ENCODE measurements at regions of chr17 and their contacts with region 1.

Region 1: DNA sequence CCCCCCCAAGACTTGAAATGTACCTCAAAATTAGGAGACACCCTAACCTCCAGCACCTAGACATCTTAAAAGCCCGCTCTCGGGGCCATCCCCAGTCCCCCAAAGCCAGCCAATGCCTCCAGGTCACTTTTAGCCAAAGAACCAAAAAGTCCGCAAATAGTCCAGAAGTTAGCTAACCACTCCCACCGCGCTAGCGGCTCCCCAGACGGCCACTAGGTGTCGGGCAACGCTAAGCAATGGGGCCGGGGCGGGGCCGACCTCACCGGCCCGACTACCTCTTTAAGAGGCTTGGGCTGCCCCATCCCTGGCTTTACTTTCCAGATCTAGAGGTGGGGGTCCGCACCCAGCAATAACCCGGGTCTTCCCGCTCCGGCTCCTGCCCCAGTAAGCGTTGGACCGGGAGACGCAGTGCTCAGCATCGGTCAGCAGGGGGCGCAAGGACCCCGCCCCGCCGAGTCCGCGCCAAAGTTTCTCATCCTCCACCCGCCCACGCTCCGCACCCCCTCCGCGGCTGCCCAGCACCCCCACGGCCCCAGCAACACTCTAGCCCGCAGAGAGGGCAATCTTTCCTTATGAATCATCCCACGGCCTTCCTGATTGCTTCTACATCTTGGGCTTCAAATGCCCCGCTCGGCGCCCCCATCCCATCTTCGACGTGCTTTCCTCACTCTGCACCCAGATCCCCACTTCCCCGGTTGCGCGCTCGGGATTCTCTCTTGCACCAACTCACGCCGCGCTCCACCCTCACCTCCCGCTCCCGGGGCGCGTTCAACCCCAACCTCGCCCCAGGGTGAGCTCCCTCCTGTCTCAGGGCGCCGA is 765 bp downstream of the COL1A1 start:
- DNase-seq: peak; percentile 80
- H3K4me3 ChIP-seq: peak overlapping the region; percentile 49 to 62 (median 61)
- H3K27ac ChIP-seq: peak overlapping the region; percentile 49
- H3K4me1 ChIP-seq: peaks cover 20% of the 10 kb centered on the region
- H3K27me3 ChIP-seq: no peaks in the 10 kb centered on the region
- CTCF ChIP-seq: peak; percentile 69 to 95

Region 2: DNA sequence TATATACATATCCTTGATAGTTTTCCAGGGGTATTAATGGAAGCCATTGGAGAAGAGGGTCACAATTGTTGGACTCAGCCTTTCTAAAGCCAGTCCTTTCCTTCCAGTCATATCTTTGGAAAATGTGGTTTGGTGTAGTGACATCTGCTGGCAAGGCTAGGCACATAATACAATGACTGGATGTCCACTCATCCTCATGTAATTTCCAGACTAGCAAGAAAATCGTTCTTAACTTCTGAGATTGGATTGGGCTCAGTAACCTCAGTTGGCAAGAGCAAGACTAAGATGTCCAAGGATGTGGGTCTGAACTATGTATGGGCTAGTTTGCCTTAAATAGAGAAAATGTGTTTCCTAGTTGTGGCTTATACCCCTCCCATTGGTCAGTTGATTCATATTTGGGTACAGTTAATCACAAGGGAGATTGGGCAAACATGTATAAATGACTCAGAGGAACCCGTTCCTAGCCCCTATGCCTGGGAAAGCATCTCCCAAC is 420.9 kb before region 1 on chr17:
- CTCF ChIA-PET with region 1: no interaction called
- dilution Hi-C with region 1: no loop called
- in situ Hi-C with region 1: no loop called
- intact Hi-C with region 1: no loop called
- DNase-seq: peak; percentile 81
- H3K4me3 ChIP-seq: no peak overlapping the region
- H3K27ac ChIP-seq: no peak overlapping the region
- H3K4me1 ChIP-seq: peaks cover 15% of the 10 kb centered on the region
- H3K27me3 ChIP-seq: no peaks in the 10 kb centered on the region
- CTCF ChIP-seq: peak; percentile 53 to 78

Region 3: DNA sequence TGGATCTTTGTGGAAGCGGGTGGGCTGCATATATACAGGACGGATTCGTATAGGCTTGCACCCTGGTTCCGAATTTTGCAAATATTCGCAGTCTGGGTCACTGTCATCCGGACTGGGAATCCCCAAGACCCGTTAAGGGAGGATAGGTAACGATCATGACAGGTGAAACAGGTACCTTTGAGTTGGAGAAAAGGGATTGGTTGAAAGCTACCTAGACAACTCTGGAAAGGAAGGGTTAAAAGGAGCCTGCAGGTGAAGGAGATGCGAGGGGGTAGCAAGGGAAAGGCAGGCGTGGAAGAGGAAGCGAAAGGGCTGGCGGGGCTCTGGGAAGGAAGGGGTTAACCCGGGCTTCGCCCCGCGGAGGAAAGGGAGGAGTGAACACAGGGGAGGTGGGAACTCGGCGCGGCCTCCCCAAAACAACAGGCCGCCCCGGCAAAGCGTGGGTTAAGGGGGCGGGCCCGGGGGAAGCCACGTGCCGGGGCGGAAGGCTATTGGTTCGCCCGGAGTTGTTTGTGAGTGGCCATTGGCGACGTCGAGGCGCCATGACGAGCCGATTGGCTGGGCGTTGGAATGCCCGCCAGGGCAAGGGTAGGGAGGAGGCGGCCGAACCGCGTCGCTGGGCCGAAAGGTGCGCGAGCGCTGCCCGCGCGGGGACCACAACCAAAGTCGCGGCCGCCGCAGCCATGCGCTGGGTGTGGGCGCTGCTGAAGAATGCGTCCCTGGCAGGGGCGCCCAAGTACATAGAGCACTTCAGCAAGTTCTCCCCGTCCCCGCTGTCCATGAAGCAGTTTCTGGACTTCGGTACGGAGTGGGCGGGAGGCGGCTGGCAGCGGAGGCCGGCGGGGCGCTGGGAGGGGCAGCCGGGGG is 105.7 kb before region 1 on chr17 and contains the start of gene PDK2:
- CTCF ChIA-PET with region 1: no interaction called
- dilution Hi-C with region 1: no loop called
- in situ Hi-C with region 1: no loop called
- intact Hi-C with region 1: loop called (anchors 1 kb)
- DNase-seq: peak; percentile 87
- H3K4me3 ChIP-seq: peak within 1 kb of the TSS in 2 of 3 experiments; percentile 13 to 54
- H3K27ac ChIP-seq: no peak within 1 kb of the TSS
- H3K4me1 ChIP-seq: peaks cover 9% of the 10 kb centered on the region
- H3K27me3 ChIP-seq: no peaks in the 10 kb centered on the region
- CTCF ChIP-seq: no peak
- total RNA-seq, gene PDK2: 18.2 to 24.8 TPM

Region 4: GRCh38 chr17:50146927-50147665 is 53.6 kb before region 1 on chr17:
- CTCF ChIA-PET with region 1: no interaction called
- dilution Hi-C with region 1: no loop called
- in situ Hi-C with region 1: no loop called
- intact Hi-C with region 1: no loop called
- DNase-seq: no peak
- H3K4me3 ChIP-seq: no peak overlapping the region
- H3K27ac ChIP-seq: no peak overlapping the region
- H3K4me1 ChIP-seq: peaks cover 33% of the 10 kb centered on the region
- H3K27me3 ChIP-seq: no peaks in the 10 kb centered on the region
- CTCF ChIP-seq: no peak

Region 5: DNA sequence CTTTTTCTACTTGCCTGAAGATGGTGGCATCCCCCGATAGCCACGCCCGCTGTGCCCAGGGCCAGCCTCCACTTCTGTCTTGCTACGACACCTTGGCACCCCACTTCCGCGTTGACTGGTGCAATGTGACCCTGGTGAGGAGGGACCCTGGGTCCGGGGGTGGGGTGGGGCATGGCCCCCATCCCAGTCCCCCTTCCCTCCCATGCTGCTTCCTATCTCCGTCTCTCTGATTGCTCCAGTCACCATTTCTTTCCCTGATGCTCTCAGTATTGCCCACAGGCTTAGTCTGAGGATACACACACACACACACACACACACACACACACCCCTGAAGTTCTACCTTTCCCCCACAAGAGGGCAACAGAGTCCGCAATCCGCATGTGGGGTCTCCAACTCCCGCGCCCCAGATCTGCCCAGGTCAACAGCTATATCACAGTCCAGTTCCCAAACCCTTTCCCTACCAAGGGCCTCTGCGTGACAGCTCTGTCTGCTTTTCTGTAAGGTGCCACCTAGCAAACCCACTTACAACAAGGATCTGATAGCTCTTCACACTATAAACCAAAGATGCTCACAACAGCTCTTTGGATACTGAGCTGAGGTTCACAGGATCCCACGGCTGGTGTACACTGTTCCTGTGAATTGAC is 31.4 kb before region 1 on chr17:
- CTCF ChIA-PET with region 1: interaction called, 8 read pairs
- dilution Hi-C with region 1: no loop called
- in situ Hi-C with region 1: no loop called
- intact Hi-C with region 1: loop called (anchors 1 kb)
- DNase-seq: peak; percentile 68
- H3K4me3 ChIP-seq: no peak overlapping the region
- H3K27ac ChIP-seq: no peak overlapping the region
- H3K4me1 ChIP-seq: peaks cover 4% of the 10 kb centered on the region
- H3K27me3 ChIP-seq: no peaks in the 10 kb centered on the region
- CTCF ChIP-seq: peak; percentile 90 to 94

Region 6: GRCh38 chr17:50289991-50290702 is 89.5 kb after region 1 on chr17:
- CTCF ChIA-PET with region 1: no interaction called
- dilution Hi-C with region 1: loop called (anchors 5 kb)
- in situ Hi-C with region 1: loop called in 1 of 2 experiments (anchors 5 kb)
- intact Hi-C with region 1: no loop called
- DNase-seq: peak; percentile 89
- H3K4me3 ChIP-seq: peak overlapping the region in 1 of 3 experiments; percentile 10
- H3K27ac ChIP-seq: peak overlapping the region; percentile 37
- H3K4me1 ChIP-seq: peaks cover 20% of the 10 kb centered on the region
- H3K27me3 ChIP-seq: no peaks in the 10 kb centered on the region
- CTCF ChIP-seq: no peak

Region 7: GRCh38 chr17:50361561-50362480 is 161.2 kb after region 1 on chr17:
- CTCF ChIA-PET with region 1: no interaction called
- dilution Hi-C with region 1: no loop called
- in situ Hi-C with region 1: no loop called
- intact Hi-C with region 1: loop called (anchors 1 kb)
- DNase-seq: peak; percentile 46
- H3K4me3 ChIP-seq: no peak overlapping the region
- H3K27ac ChIP-seq: no peak overlapping the region
- H3K4me1 ChIP-seq: no peaks in the 10 kb centered on the region
- H3K27me3 ChIP-seq: no peaks in the 10 kb centered on the region
- CTCF ChIP-seq: peak; percentile 81

Region 8: GRCh38 chr17:50534222-50534978 is 333.7 kb after region 1 on chr17:
- CTCF ChIA-PET with region 1: no interaction called
- dilution Hi-C with region 1: no loop called
- in situ Hi-C with region 1: no loop called
- intact Hi-C with region 1: loop called (anchors 10 kb)
- DNase-seq: peak; percentile 86
- H3K4me3 ChIP-seq: peak overlapping the region; percentile 51 to 87 (median 64)
- H3K27ac ChIP-seq: peak overlapping the region; percentile 36
- H3K4me1 ChIP-seq: peaks cover 56% of the 10 kb centered on the region
- H3K27me3 ChIP-seq: no peaks in the 10 kb centered on the region
- CTCF ChIP-seq: peak; percentile 52 to 74